Common myeloid progenitor, CD34-positive (primary cell): ENCODE measurements at regions of chr17 and their contacts with region 1.

Region 1: DNA sequence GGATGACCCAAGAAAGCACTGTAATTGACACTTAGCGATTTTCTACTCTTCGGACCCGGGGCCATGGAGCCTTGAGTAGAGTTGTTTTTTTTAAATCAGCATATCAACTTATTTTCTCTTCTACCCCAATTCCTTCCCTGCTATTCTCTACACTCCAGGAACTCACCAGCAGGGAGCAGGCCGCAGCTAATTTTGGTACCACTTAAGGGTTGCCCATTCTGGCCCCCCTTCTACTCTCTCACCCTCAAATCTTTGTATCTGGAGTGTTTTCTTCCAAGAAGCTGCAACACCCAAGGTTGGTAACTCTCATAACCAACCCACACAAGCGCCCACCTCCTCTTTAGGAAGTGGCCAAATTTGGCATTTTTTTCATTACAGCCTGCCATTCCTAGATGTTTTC is 5.5 kb upstream of the ERAL1 start:
- DNase-seq: peak; percentile 75 to 86 (median 85)
- H3K4me3 ChIP-seq: no peak overlapping the region
- H3K27ac ChIP-seq: no peak overlapping the region
- H3K4me1 ChIP-seq: peaks cover 0 to 3% (median 3%) of the 10 kb centered on the region in 4 experiments
- H3K27me3 ChIP-seq: no peaks in the 10 kb centered on the region

Region 2: GRCh38 chr17:28878981-28879380 is 29.7 kb after region 1 on chr17:
- CTCF ChIA-PET with region 1: interaction called, 10 read pairs
- POLR2A ChIA-PET with region 1: no interaction called
- DNase-seq: peak in 2 of 3 donors; percentile 35 to 37
- H3K4me3 ChIP-seq: no peak overlapping the region
- H3K27ac ChIP-seq: no peak overlapping the region
- H3K4me1 ChIP-seq: no peaks in the 10 kb centered on the region
- H3K27me3 ChIP-seq: no peaks in the 10 kb centered on the region

Region 3: GRCh38 chr17:28902819-28903545 is 53.7 kb after region 1 on chr17 and contains the start of gene DHRS13:
- CTCF ChIA-PET with region 1: interaction called, 29 read pairs
- POLR2A ChIA-PET with region 1: no interaction called
- DNase-seq: peak; percentile 96 to 97 (median 96)
- H3K4me3 ChIP-seq: peak within 1 kb of the TSS; percentile 62 to 79 (median 75)
- H3K27ac ChIP-seq: peak within 1 kb of the TSS; percentile 21 to 77
- H3K4me1 ChIP-seq: peaks cover 0 to 32% (median 23%) of the 10 kb centered on the region in 4 experiments
- H3K27me3 ChIP-seq: no peaks in the 10 kb centered on the region

Region 4: DNA sequence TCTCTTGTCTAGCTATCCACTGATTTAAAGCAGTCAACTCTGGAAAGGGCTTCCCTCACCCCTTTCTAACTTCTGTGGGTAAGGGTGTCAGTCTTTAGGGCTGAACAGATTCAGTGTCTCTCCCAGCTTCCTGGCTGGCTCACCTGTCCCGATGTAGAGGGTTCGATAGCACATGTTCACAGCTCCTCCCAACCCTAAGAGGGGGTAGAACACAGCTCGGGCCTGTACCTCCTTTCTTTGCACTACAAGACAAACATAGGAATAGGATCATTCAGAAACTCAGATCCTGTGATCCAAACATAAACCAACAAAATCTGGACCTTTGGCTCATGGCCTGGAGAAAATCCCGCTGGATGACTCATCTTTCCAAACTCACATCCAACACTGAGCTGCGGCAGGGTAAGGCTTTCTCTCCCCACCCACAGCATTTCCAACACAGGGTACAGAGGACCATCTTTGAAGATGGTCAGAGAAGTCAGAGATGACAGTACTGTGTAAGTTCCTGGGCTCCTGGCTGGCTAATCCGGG is 59.4 kb after region 1 on chr17:
- CTCF ChIA-PET with region 1: interaction called, 29 read pairs
- POLR2A ChIA-PET with region 1: no interaction called
- DNase-seq: no peak
- H3K4me3 ChIP-seq: no peak overlapping the region
- H3K27ac ChIP-seq: peak overlapping the region in 1 of 2 experiments; percentile 18
- H3K4me1 ChIP-seq: no peaks in the 10 kb centered on the region
- H3K27me3 ChIP-seq: no peaks in the 10 kb centered on the region